Activated T-helper 2 cell treated with anti-CD3 and anti-CD28 coated beads, Interferon-gamma antibody, Interleukin-2, Interleukin-4, amounts not matched to agents 10 μg/mL and 5 μg/mL and 100 μg/mL, durations not matched to agents 14 hours and 24 hours and 36 hours (primary cell): ENCODE measurements at regions of chr3 and their contacts with region 1.

Region 1: DNA sequence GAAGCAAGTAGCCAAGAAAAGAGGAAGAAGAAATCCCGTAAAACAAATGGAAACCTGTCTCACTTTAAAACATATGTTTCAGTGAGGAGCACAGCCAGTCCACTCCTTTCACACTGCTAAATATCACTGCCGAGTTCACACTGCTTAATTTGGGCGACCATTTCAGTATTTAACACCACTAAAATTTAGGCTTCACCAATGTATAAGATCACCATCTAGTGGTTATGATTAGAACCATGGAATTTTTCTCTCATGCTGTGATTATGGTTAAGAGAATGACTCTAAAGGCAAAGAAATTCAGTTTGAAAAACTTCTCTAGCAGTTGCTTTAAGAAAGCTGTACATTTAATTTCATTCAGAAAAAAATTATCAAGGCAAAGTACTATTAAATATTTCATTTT is 16.6 kb downstream of the SLC4A7 start:
- DNase-seq: no peak
- H3K4me3 Mint-ChIP-seq: no peak overlapping the region
- H3K27ac Mint-ChIP-seq: no peak overlapping the region
- H3K4me1 Mint-ChIP-seq: peaks cover 14% of the 10 kb centered on the region
- H3K27me3 Mint-ChIP-seq: no peaks in the 10 kb centered on the region

Region 2: GRCh38 chr3:27134165-27134796 is 333.3 kb before region 1 on chr3:
- intact Hi-C with region 1: loop called (anchors 2 kb)
- DNase-seq: peak; percentile 30
- H3K4me3 Mint-ChIP-seq: no peak overlapping the region
- H3K27ac Mint-ChIP-seq: no peak overlapping the region
- H3K4me1 Mint-ChIP-seq: no peaks in the 10 kb centered on the region
- H3K27me3 Mint-ChIP-seq: no peaks in the 10 kb centered on the region

Region 3: GRCh38 chr3:27312044-27312668 is 155.4 kb before region 1 on chr3:
- intact Hi-C with region 1: loop called (anchors 1 kb)
- DNase-seq: no peak
- H3K4me3 Mint-ChIP-seq: no peak overlapping the region
- H3K27ac Mint-ChIP-seq: no peak overlapping the region
- H3K4me1 Mint-ChIP-seq: no peaks in the 10 kb centered on the region
- H3K27me3 Mint-ChIP-seq: peaks cover 15% of the 10 kb centered on the region

Region 4: GRCh38 chr3:27357665-27358258 is 109.8 kb before region 1 on chr3:
- intact Hi-C with region 1: loop called (anchors 2 kb)
- DNase-seq: peak; percentile 39
- H3K4me3 Mint-ChIP-seq: no peak overlapping the region
- H3K27ac Mint-ChIP-seq: no peak overlapping the region
- H3K4me1 Mint-ChIP-seq: peaks cover 35% of the 10 kb centered on the region
- H3K27me3 Mint-ChIP-seq: peaks cover 2% of the 10 kb centered on the region

Region 5: GRCh38 chr3:27585429-27585828 is 117.9 kb after region 1 on chr3:
- intact Hi-C with region 1: no loop called
- DNase-seq: no peak
- H3K4me3 Mint-ChIP-seq: no peak overlapping the region
- H3K27ac Mint-ChIP-seq: no peak overlapping the region
- H3K4me1 Mint-ChIP-seq: peaks cover 8% of the 10 kb centered on the region
- H3K27me3 Mint-ChIP-seq: no peaks in the 10 kb centered on the region

Region 6: GRCh38 chr3:27657404-27657803 is 189.9 kb after region 1 on chr3:
- intact Hi-C with region 1: no loop called
- DNase-seq: no peak
- H3K4me3 Mint-ChIP-seq: no peak overlapping the region
- H3K27ac Mint-ChIP-seq: no peak overlapping the region
- H3K4me1 Mint-ChIP-seq: peaks cover 5% of the 10 kb centered on the region
- H3K27me3 Mint-ChIP-seq: peaks cover 6% of the 10 kb centered on the region